Panc1 (cell line): ENCODE measurements at regions of chr4 and their contacts with region 1.

Region 1: GRCh38 chr4:26860157-26860921 is at the start of gene STIM2:
- DNase-seq: peak; percentile 71
- ATAC-seq: peak; percentile 90
- H3K4me3 ChIP-seq: peak within 1 kb of the TSS; percentile 78 to 90
- H3K27ac ChIP-seq: peak within 1 kb of the TSS; percentile 89
- H3K4me1 ChIP-seq: peaks cover 18% of the 10 kb centered on the region
- H3K27me3 ChIP-seq: no peaks in the 10 kb centered on the region; the same call in 1 of the 2 replicates
- CTCF ChIP-seq: peak; percentile 31; the same call in 1 of the 2 replicates
- total RNA-seq, gene STIM2: 23.9 TPM

Region 2: DNA sequence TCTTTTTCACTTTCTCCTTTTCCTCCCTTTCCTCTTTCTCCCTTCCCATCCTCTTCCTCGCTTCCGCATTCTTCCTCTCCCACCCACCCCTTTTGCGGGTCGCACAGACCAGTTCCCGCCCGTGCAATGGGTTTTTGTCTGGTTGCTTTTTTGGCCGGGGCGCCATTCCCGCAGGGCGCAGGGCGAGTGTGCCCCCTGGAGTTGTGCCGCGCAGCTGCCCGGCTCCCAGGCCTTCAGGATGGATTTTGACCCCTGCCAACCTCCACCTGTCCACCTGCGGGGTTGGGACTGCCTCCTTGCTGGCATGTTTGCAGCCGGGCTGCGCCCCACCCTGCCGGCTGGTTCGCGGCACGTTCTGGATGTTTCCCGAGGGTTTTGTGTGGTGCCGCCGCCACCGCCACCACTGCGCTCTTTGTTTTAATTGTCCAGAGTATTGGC is 997.0 kb before region 1 on chr4:
- CTCF ChIA-PET with region 1: no interaction called
- POLR2A ChIA-PET with region 1: no interaction called
- in situ Hi-C with region 1: no loop called
- intact Hi-C with region 1: no loop called
- DNase-seq: no peak
- ATAC-seq: no peak
- H3K4me3 ChIP-seq: no peak overlapping the region
- H3K27ac ChIP-seq: no peak overlapping the region
- H3K4me1 ChIP-seq: no peaks in the 10 kb centered on the region
- H3K27me3 ChIP-seq: no peaks in the 10 kb centered on the region; the same call in none of the 2 replicates
- CTCF ChIP-seq: peak; percentile 27

Region 3: GRCh38 chr4:26496207-26496783 is 364.0 kb before region 1 on chr4:
- CTCF ChIA-PET with region 1: no interaction called
- POLR2A ChIA-PET with region 1: no interaction called
- in situ Hi-C with region 1: no loop called
- intact Hi-C with region 1: no loop called
- DNase-seq: no peak
- ATAC-seq: no peak
- H3K4me3 ChIP-seq: no peak overlapping the region
- H3K27ac ChIP-seq: no peak overlapping the region
- H3K4me1 ChIP-seq: no peaks in the 10 kb centered on the region
- H3K27me3 ChIP-seq: no peaks in the 10 kb centered on the region
- CTCF ChIP-seq: 0 out of 2 replicates have a peak, but pooled peaks have one; percentile 16

Region 4: DNA sequence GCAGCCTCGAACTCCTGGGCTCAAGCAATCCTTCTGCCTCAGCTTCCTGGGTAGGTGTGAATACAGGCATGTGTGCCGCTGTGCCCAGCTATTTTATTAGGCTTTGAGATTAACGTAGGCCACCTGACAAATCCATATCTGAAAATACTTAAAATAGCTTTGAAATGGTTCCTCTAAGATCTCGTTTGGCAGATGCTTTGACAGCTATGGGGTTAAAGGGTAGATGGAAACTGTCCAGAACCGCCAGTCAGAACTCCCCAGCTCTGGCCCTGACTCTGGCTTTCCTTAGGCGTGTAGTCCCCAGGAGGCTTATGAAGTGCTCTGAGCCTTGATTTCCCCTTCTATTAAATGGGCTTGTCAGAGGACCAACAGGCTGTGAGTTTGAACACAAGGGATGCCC is 32.5 kb before region 1 on chr4:
- CTCF ChIA-PET with region 1: no interaction called
- POLR2A ChIA-PET with region 1: no interaction called
- in situ Hi-C with region 1: no loop called
- intact Hi-C with region 1: no loop called
- DNase-seq: no peak
- ATAC-seq: no peak
- H3K4me3 ChIP-seq: no peak overlapping the region
- H3K27ac ChIP-seq: no peak overlapping the region
- H3K4me1 ChIP-seq: no peaks in the 10 kb centered on the region
- H3K27me3 ChIP-seq: no peaks in the 10 kb centered on the region
- CTCF ChIP-seq: no peak

Region 5: DNA sequence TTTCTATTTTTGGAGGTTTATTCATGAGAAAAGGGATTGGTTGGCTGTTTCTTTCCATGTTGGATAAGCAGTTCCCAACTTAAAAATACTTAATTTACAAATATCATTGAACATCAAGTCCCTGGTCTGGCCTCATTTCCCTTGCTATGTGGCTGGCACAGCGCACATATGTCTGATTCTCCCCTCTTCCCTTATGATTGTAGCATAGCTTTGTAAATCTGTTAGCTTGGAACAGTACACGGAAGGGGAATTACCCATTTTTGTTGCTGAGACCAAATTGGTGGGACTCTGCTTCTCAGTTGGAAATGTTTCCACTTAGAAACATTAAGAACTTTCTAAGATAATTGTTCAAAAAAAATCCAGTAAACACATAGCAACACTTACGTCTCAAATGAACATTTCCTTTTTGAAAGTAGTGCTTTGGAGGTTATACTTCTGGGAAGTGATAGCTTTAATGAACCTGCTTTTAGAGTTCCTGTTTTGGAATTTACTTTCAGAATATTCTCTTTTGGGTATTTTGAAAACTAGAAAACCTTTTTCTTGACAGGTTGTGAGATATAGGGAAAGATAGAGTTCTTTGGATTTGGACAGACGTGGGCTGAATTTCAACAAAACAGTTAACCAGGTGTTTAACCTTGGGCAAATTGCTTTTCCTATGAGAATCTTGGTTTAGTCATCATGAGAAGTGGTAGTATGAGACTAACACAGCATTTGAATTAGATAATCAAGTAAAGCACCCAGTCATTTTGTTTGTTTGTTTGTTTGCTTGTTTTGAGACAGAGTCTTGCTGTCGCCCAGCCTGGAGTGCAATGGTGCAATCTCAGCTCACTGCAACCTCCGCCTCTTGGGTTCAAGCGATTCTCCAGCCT is 47.6 kb after region 1 on chr4:
- CTCF ChIA-PET with region 1: interaction called, 20 read pairs
- POLR2A ChIA-PET with region 1: no interaction called
- in situ Hi-C with region 1: no loop called
- intact Hi-C with region 1: no loop called
- DNase-seq: no peak
- ATAC-seq: no peak
- H3K4me3 ChIP-seq: no peak overlapping the region
- H3K27ac ChIP-seq: no peak overlapping the region
- H3K4me1 ChIP-seq: no peaks in the 10 kb centered on the region
- H3K27me3 ChIP-seq: no peaks in the 10 kb centered on the region
- CTCF ChIP-seq: no peak

Region 6: GRCh38 chr4:27010334-27010940 is 150.1 kb after region 1 on chr4:
- CTCF ChIA-PET with region 1: no interaction called
- POLR2A ChIA-PET with region 1: no interaction called
- in situ Hi-C with region 1: no loop called
- intact Hi-C with region 1: loop called (anchors 5 kb)
- DNase-seq: peak; percentile 38
- ATAC-seq: peak; percentile 81; the same call in 1 of the 2 replicates
- H3K4me3 ChIP-seq: no peak overlapping the region
- H3K27ac ChIP-seq: no peak overlapping the region
- H3K4me1 ChIP-seq: no peaks in the 10 kb centered on the region
- H3K27me3 ChIP-seq: no peaks in the 10 kb centered on the region
- CTCF ChIP-seq: peak; percentile 78